Panc1 (cell line): ENCODE measurements at regions of chr1 and their contacts with region 1.

Region 1: GRCh38 chr1:156226116-156226538 is 13.3 kb downstream of the PMF1 start:
- DNase-seq: no peak
- ATAC-seq: no peak
- H3K4me3 ChIP-seq: no peak overlapping the region
- H3K27ac ChIP-seq: no peak overlapping the region
- H3K4me1 ChIP-seq: peaks cover 6% of the 10 kb centered on the region; the same call in 1 of the 2 replicates
- H3K27me3 ChIP-seq: no peaks in the 10 kb centered on the region
- CTCF ChIP-seq: no peak

Region 2: GRCh38 chr1:155978325-155978972 is 247.7 kb before region 1 on chr1 and contains the start of gene ARHGEF2:
- CTCF ChIA-PET with region 1: no interaction called
- POLR2A ChIA-PET with region 1: no interaction called
- in situ Hi-C with region 1: no loop called
- intact Hi-C with region 1: no loop called
- DNase-seq: no peak
- ATAC-seq: peak; percentile 85
- H3K4me3 ChIP-seq: peak within 1 kb of the TSS; percentile 82 to 89
- H3K27ac ChIP-seq: peak within 1 kb of the TSS; percentile 99
- H3K4me1 ChIP-seq: peaks cover 61% of the 10 kb centered on the region
- H3K27me3 ChIP-seq: no peaks in the 10 kb centered on the region
- CTCF ChIP-seq: no peak
- total RNA-seq, gene ARHGEF2: 87.0 TPM

Region 3: DNA sequence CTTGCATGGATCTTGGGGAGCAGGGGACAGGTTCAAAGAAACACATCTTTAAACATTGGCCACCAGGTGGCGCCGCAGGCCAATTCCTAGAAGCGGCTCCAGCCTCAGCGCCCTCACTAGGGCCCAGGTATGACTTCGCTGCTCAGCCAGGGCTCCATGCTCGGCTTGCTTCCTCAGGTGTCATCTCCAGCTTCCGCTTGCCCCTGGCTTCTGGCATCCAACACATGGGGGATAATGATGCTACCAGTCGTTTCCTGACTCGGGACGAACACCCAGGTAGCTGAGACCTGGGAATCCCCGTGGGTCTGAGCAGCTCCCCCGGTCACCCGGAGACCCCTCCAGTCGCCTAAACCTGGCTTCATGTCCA is 135.3 kb before region 1 on chr1:
- CTCF ChIA-PET with region 1: interaction called, 7 read pairs
- POLR2A ChIA-PET with region 1: interaction called, 3 read pairs
- in situ Hi-C with region 1: no loop called
- intact Hi-C with region 1: loop called (anchors 2 kb)
- DNase-seq: no peak
- ATAC-seq: peak; percentile 98
- H3K4me3 ChIP-seq: no peak overlapping the region
- H3K27ac ChIP-seq: no peak overlapping the region
- H3K4me1 ChIP-seq: peaks cover 10% of the 10 kb centered on the region; the same call in 1 of the 2 replicates
- H3K27me3 ChIP-seq: no peaks in the 10 kb centered on the region
- CTCF ChIP-seq: peak; percentile 91

Region 4: GRCh38 chr1:156140879-156141252 is 85.3 kb before region 1 on chr1:
- CTCF ChIA-PET with region 1: interaction called, 21 read pairs
- POLR2A ChIA-PET with region 1: interaction called, 3 read pairs
- in situ Hi-C with region 1: no loop called
- intact Hi-C with region 1: loop called (anchors 1 kb)
- DNase-seq: no peak
- ATAC-seq: peak; percentile 24
- H3K4me3 ChIP-seq: no peak overlapping the region
- H3K27ac ChIP-seq: peak overlapping the region; percentile 46
- H3K4me1 ChIP-seq: peaks cover 23% of the 10 kb centered on the region
- H3K27me3 ChIP-seq: no peaks in the 10 kb centered on the region
- CTCF ChIP-seq: no peak

Region 5: GRCh38 chr1:156146020-156146768 is 79.9 kb before region 1 on chr1:
- CTCF ChIA-PET with region 1: interaction called, 21 read pairs
- POLR2A ChIA-PET with region 1: interaction called, 3 read pairs
- in situ Hi-C with region 1: no loop called
- intact Hi-C with region 1: loop called (anchors 1 kb)
- DNase-seq: peak; percentile 82
- ATAC-seq: peak; percentile 70
- H3K4me3 ChIP-seq: peak overlapping the region in 1 of 2 experiments; percentile 43; a peak in 2 of 4 replicates
- H3K27ac ChIP-seq: peak overlapping the region; percentile 35; the same call in 1 of the 2 replicates
- H3K4me1 ChIP-seq: peaks cover 18% of the 10 kb centered on the region
- H3K27me3 ChIP-seq: no peaks in the 10 kb centered on the region
- CTCF ChIP-seq: peak; percentile 89

Region 6: DNA sequence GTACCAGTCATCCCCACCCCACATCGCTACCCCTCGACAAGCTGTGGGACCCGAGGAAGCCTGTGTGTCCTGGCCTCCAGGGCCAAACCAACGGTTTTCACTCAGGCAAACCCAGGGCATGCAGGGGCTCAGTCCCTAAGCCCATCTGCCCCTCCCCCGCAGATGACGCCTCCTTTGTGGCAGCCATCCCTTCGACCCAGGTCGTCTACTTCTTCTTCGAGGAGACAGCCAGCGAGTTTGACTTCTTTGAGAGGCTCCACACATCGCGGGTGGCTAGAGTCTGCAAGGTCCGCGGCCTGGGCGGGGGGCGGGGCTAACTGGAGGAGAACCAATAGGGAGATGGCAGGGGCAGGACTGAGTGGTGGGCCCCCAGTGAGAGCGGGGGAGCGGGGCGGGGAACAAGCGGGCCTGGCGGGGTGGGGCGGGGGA is 65.4 kb before region 1 on chr1:
- CTCF ChIA-PET with region 1: interaction called, 10 read pairs
- POLR2A ChIA-PET with region 1: interaction called, 4 read pairs
- in situ Hi-C with region 1: no loop called
- intact Hi-C with region 1: no loop called
- DNase-seq: no peak
- ATAC-seq: no peak
- H3K4me3 ChIP-seq: no peak overlapping the region
- H3K27ac ChIP-seq: no peak overlapping the region
- H3K4me1 ChIP-seq: no peaks in the 10 kb centered on the region; the same call in 1 of the 2 replicates
- H3K27me3 ChIP-seq: no peaks in the 10 kb centered on the region
- CTCF ChIP-seq: no peak

Region 7: DNA sequence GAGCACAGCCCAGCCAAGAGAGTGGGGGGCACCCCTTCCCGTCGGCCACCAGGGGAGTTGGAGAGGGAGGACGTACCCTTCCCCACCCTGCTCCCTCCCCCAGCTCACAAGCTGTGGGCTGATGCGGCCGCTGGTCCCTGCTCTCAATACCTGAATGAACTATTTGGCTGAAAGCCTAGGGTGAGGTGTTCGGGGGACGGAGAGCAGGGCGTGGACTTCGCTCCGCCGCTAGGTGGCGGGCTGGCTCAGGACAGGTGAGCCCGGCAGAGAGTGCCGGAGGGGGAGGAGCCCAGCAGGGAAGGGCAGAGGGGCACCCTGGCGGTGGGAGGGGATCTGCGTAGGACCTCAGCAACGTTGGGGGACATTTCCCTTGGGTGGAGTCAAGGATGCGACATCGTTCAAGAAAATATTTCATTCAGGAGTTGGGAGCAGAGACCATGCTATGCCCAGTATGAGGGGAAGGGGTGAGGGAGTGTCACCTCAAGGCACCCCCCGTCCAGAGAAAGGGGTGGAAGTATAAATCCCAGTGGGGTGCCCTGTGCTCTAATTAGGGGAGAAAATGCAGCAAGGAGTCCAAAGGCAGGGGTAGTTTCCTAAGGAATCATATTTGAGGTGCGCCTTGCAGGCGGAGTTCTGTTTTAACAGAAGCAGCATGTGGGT is 130.9 kb after region 1 on chr1:
- CTCF ChIA-PET with region 1: no interaction called
- POLR2A ChIA-PET with region 1: no interaction called
- in situ Hi-C with region 1: no loop called
- intact Hi-C with region 1: no loop called
- DNase-seq: no peak
- ATAC-seq: peak; percentile 95
- H3K4me3 ChIP-seq: no peak overlapping the region; a peak in 1 of 4 replicates
- H3K27ac ChIP-seq: no peak overlapping the region
- H3K4me1 ChIP-seq: no peaks in the 10 kb centered on the region
- H3K27me3 ChIP-seq: no peaks in the 10 kb centered on the region
- CTCF ChIP-seq: peak; percentile 98

Region 8: GRCh38 chr1:156456622-156457465 is 230.7 kb after region 1 on chr1:
- CTCF ChIA-PET with region 1: no interaction called
- POLR2A ChIA-PET with region 1: no interaction called
- in situ Hi-C with region 1: no loop called
- intact Hi-C with region 1: loop called (anchors 5 kb)
- DNase-seq: peak; percentile 95
- ATAC-seq: peak; percentile 93
- H3K4me3 ChIP-seq: peak overlapping the region; percentile 70 to 83
- H3K27ac ChIP-seq: peak overlapping the region; percentile 98
- H3K4me1 ChIP-seq: peaks cover 7% of the 10 kb centered on the region; the same call in 1 of the 2 replicates
- H3K27me3 ChIP-seq: no peaks in the 10 kb centered on the region
- CTCF ChIP-seq: no peak; the same call in none of the 2 replicates